OCI-LY7 (cell line): ENCODE measurements at regions of chr9 and their contacts with region 1.

Region 1: DNA sequence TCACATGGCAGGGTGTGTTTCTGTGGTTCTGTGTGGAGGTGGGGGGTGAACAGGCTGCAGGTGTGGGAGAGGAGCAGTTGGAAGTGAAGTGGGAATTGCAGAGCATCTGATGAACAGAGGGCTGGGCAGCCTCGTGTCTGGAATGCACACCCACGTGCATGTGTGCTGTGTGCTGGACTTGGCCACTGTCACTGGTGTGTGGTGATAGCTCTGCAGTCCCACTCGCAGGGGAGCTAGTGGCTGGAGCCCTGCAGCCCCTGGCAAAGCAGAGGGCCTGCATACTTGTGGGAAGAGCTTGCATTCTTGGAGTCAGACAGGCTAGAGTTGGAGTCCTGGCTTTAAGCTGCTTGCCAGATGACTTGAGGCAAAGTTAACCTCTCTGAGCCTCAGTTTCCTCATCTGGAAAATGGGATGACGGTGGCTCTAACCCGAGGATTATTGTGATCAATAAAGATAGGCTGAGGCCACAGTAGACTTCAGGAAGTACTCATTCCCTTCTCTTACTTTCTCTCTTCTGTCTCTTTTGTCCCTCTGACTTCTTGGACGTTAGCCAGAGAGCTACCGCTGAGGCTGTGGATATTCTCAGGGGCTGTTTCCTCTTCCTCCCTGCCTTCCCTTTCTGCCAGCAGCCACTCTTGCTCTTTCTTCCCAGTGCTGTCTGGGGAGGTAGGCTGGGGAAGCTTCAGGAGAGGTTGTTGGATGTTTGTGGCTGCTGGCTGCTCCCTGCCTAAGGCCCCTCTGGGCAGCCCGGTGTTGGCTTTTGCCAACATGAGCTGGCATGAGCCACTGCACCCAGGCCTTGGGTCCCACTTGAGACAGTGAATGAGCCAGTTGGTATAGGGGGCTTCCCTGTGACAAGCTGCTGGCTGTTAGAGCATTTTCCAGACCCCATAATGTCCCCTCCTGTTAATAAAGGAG is 18.3 kb downstream of the PSAT1 start:
- DNase-seq: no peak
- H3K4me3 ChIP-seq: no peak overlapping the region
- H3K27ac ChIP-seq: no peak overlapping the region
- H3K4me1 ChIP-seq: no peaks in the 10 kb centered on the region
- CTCF ChIP-seq: no peak

Region 2: GRCh38 chr9:78267889-78268288 is 47.3 kb before region 1 on chr9:
- CTCF ChIA-PET with region 1: no interaction called
- POLR2A ChIA-PET with region 1: no interaction called
- intact Hi-C with region 1: loop called (anchors 5 kb)
- DNase-seq: no peak
- H3K4me3 ChIP-seq: no peak overlapping the region
- H3K27ac ChIP-seq: no peak overlapping the region
- H3K4me1 ChIP-seq: no peaks in the 10 kb centered on the region
- CTCF ChIP-seq: no peak